ENCODE measurements at regions of chrX and their contacts with region 1.

Region 1: GRCh38 chrX:17689971-17690409 is 47.3 kb upstream of the SCML1 start:
- DNase-seq: peak in 1 of 2 donors; percentile 48
- ATAC-seq: peak; percentile 52 to 91 (median 74)
- H3K4me3 ChIP-seq: no peak overlapping the region
- H3K27ac ChIP-seq: no peak overlapping the region
- H3K4me1 ChIP-seq: peaks cover 0 to 4% (median 0%) of the 10 kb centered on the region in 9 donors
- H3K27me3 ChIP-seq: peaks cover 0 to 10% (median 0%) of the 10 kb centered on the region in 7 donors
- CTCF ChIP-seq: peak; percentile 37 to 76 (median 67)

Region 2: GRCh38 chrX:17237146-17237545 is 452.8 kb before region 1 on chrX:
- intact Hi-C with region 1: loop called in 8 of 10 experiments (anchors 2 to 5 kb)
- DNase-seq: no peak
- ATAC-seq: no peak
- H3K4me3 ChIP-seq: no peak overlapping the region
- H3K27ac ChIP-seq: no peak overlapping the region
- H3K4me1 ChIP-seq: no peaks in the 10 kb centered on the region
- H3K27me3 ChIP-seq: peaks cover 0 to 22% (median 0%) of the 10 kb centered on the region in 7 donors
- CTCF ChIP-seq: no peak

Region 3: DNA sequence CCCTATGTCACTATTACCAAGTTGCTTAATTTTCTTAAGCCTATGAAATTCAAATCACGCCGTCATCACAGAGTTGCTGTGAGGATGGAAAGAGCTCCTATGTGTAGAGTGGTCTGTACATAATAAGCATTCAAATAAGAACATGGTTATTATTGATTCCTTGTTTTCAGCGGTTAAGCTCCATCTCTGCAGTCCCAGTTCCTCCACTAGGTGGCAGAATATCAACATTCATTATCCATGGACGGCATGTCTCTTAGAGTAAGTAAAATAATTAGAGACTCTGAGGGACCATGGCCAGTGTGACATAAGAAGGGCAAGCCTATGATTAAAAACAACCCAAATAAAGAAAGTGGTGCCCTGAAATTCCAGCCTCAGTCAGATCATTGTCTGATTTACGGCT is 447.5 kb before region 1 on chrX:
- intact Hi-C with region 1: loop called in 8 of 10 experiments (anchors 2 to 5 kb)
- DNase-seq: peak in 1 of 2 donors; percentile 28
- ATAC-seq: peak in 2 of 8 donors; percentile 47 to 60
- H3K4me3 ChIP-seq: no peak overlapping the region
- H3K27ac ChIP-seq: no peak overlapping the region
- H3K4me1 ChIP-seq: no peaks in the 10 kb centered on the region
- H3K27me3 ChIP-seq: peaks cover 0 to 16% (median 0%) of the 10 kb centered on the region in 7 donors
- CTCF ChIP-seq: peak; percentile 43 to 82 (median 70)

Region 4: GRCh38 chrX:17251877-17252276 is 438.1 kb before region 1 on chrX:
- intact Hi-C with region 1: loop called in 1 of 10 experiments (anchors 10 kb)
- DNase-seq: no peak
- ATAC-seq: no peak
- H3K4me3 ChIP-seq: no peak overlapping the region
- H3K27ac ChIP-seq: no peak overlapping the region
- H3K4me1 ChIP-seq: no peaks in the 10 kb centered on the region
- H3K27me3 ChIP-seq: peaks cover 0 to 3% (median 0%) of the 10 kb centered on the region in 7 donors
- CTCF ChIP-seq: no peak

Region 5: GRCh38 chrX:17374619-17375366 is 315.2 kb before region 1 on chrX and contains the start of gene NHS:
- intact Hi-C with region 1: loop called in 2 of 10 experiments (anchors 5 to 10 kb)
- DNase-seq: peak; percentile 56 to 63
- ATAC-seq: peak; percentile 77 to 92 (median 90)
- H3K4me3 ChIP-seq: peak within 1 kb of the TSS; percentile 18 to 60 (median 58)
- H3K27ac ChIP-seq: peak within 1 kb of the TSS in 5 of 10 donors; percentile 15 to 39 (median 31)
- H3K4me1 ChIP-seq: peaks cover 0 to 7% (median 0%) of the 10 kb centered on the region in 9 donors
- H3K27me3 ChIP-seq: peaks cover 0 to 70% (median 0%) of the 10 kb centered on the region in 7 donors
- CTCF ChIP-seq: peak; percentile 20 to 59 (median 44)
- total RNA-seq, gene NHS: 0.78 to 2.7 (median 1.3) TPM

Region 6: DNA sequence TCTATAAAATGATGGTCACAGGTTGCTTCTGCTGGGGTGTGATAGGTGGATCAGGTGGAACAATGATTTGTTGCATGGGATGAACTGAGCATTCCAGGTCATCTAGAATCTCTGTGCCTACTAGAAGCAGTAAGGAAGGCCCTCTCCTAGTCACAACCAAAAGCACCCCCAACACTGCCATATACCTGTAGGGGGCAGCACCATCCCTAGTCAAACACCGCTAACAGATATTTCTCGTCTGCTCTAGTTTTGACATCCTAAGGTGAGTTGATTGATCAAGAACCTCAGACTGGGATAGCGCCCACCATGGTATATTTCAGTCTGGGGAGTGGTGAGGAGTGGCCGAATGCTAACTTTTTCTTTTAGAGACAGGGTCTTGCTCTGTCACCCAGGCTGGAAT is 154.8 kb before region 1 on chrX:
- intact Hi-C with region 1: loop called in 5 of 10 experiments (anchors 5 to 10 kb)
- DNase-seq: peak in 1 of 2 donors; percentile 7
- ATAC-seq: peak in 1 of 8 donors; percentile 48
- H3K4me3 ChIP-seq: no peak overlapping the region
- H3K27ac ChIP-seq: no peak overlapping the region
- H3K4me1 ChIP-seq: no peaks in the 10 kb centered on the region
- H3K27me3 ChIP-seq: peaks cover 0 to 17% (median 0%) of the 10 kb centered on the region in 7 donors
- CTCF ChIP-seq: peak in 8 of 9 donors; percentile 21 to 51 (median 44)

Region 7: GRCh38 chrX:17590892-17591740 is 98.9 kb before region 1 on chrX:
- intact Hi-C with region 1: loop called in 4 of 10 experiments (anchors 5 to 10 kb)
- DNase-seq: peak; percentile 27 to 51
- ATAC-seq: peak; percentile 67 to 98 (median 88)
- H3K4me3 ChIP-seq: peak overlapping the region in 3 of 10 donors; percentile 10 to 24 (median 22)
- H3K27ac ChIP-seq: peak overlapping the region in 2 of 10 donors; percentile 15 to 25
- H3K4me1 ChIP-seq: peaks cover 0 to 19% (median 0%) of the 10 kb centered on the region in 9 donors
- H3K27me3 ChIP-seq: peaks cover 0 to 8% (median 0%) of the 10 kb centered on the region in 7 donors
- CTCF ChIP-seq: peak; percentile 52 to 76 (median 66)

Region 8: GRCh38 chrX:17736856-17737706 is 47.1 kb after region 1 on chrX and contains the start of gene SCML1:
- intact Hi-C with region 1: no loop called
- DNase-seq: peak; percentile 96 to 97
- ATAC-seq: peak; percentile 97 to 99 (median 98)
- H3K4me3 ChIP-seq: peak within 1 kb of the TSS; percentile 50 to 78 (median 68)
- H3K27ac ChIP-seq: peak within 1 kb of the TSS; percentile 82 to 91 (median 89)
- H3K4me1 ChIP-seq: peaks cover 0 to 13% (median 7%) of the 10 kb centered on the region in 9 donors
- H3K27me3 ChIP-seq: peaks cover 0 to 54% (median 0%) of the 10 kb centered on the region in 7 donors
- CTCF ChIP-seq: no peak
- total RNA-seq, gene SCML1: 4.9 to 9.5 (median 5.7) TPM

Measured in heart right ventricle (tissue), 16 donors.